GM12878 (cell line): ENCODE measurements at regions of chr2 and their contacts with region 1.

Region 1: GRCh38 chr2:161223139-161223732 is 63.0 kb downstream of the TANK start:
- DNase-seq: no peak
- ATAC-seq: peak; percentile 81
- H3K4me3 ChIP-seq: no peak overlapping the region
- H3K27ac ChIP-seq: no peak overlapping the region
- H3K4me1 ChIP-seq: no peaks in the 10 kb centered on the region
- H3K27me3 ChIP-seq: no peaks in the 10 kb centered on the region
- CTCF ChIP-seq: peak; percentile 51 to 65 (median 55)
- EP300 ChIP-seq: no peak
- POLR2A ChIP-seq: no peak
- RAD21 ChIP-seq: peak; percentile 71

Region 2: GRCh38 chr2:160613466-160614153 is 609.6 kb before region 1 on chr2:
- CTCF ChIA-PET with region 1: no interaction called
- POLR2A ChIA-PET with region 1: no interaction called
- RAD21 ChIA-PET with region 1: no interaction called
- SMC1A ChIA-PET with region 1: no interaction called
- in situ Hi-C with region 1: no loop called
- intact Hi-C with region 1: no loop called
- DNase-seq: no peak
- ATAC-seq: no peak
- H3K4me3 ChIP-seq: no peak overlapping the region
- H3K27ac ChIP-seq: no peak overlapping the region
- H3K4me1 ChIP-seq: no peaks in the 10 kb centered on the region
- H3K27me3 ChIP-seq: no peaks in the 10 kb centered on the region
- CTCF ChIP-seq: no peak
- EP300 ChIP-seq: no peak
- POLR2A ChIP-seq: no peak
- RAD21 ChIP-seq: no peak

Region 3: GRCh38 chr2:161208527-161209139 is 14.6 kb before region 1 on chr2:
- CTCF ChIA-PET with region 1: interaction called, 13 read pairs
- POLR2A ChIA-PET with region 1: no interaction called
- RAD21 ChIA-PET with region 1: interaction called, 7 read pairs
- SMC1A ChIA-PET with region 1: interaction called, 12 read pairs
- in situ Hi-C with region 1: no loop called
- intact Hi-C with region 1: no loop called
- DNase-seq: no peak
- ATAC-seq: peak; percentile 65
- H3K4me3 ChIP-seq: no peak overlapping the region
- H3K27ac ChIP-seq: no peak overlapping the region
- H3K4me1 ChIP-seq: peaks cover 5% of the 10 kb centered on the region
- H3K27me3 ChIP-seq: no peaks in the 10 kb centered on the region
- CTCF ChIP-seq: no peak
- EP300 ChIP-seq: no peak
- POLR2A ChIP-seq: no peak
- RAD21 ChIP-seq: no peak

Region 4: GRCh38 chr2:161238560-161239325 is 15.5 kb after region 1 on chr2:
- CTCF ChIA-PET with region 1: interaction called, 52 read pairs
- POLR2A ChIA-PET with region 1: interaction called, 4 read pairs
- RAD21 ChIA-PET with region 1: interaction called, 17 read pairs
- SMC1A ChIA-PET with region 1: interaction called, 46 read pairs
- in situ Hi-C with region 1: no loop called
- intact Hi-C with region 1: no loop called
- DNase-seq: no peak
- ATAC-seq: peak; percentile 44
- H3K4me3 ChIP-seq: peak overlapping the region; percentile 76
- H3K27ac ChIP-seq: peak overlapping the region; percentile 31
- H3K4me1 ChIP-seq: peaks cover 20% of the 10 kb centered on the region
- H3K27me3 ChIP-seq: no peaks in the 10 kb centered on the region
- CTCF ChIP-seq: no peak
- EP300 ChIP-seq: no peak
- POLR2A ChIP-seq: 0 out of 2 replicates have a peak, but pooled peaks have one; percentile 29
- RAD21 ChIP-seq: no peak

Region 5: DNA sequence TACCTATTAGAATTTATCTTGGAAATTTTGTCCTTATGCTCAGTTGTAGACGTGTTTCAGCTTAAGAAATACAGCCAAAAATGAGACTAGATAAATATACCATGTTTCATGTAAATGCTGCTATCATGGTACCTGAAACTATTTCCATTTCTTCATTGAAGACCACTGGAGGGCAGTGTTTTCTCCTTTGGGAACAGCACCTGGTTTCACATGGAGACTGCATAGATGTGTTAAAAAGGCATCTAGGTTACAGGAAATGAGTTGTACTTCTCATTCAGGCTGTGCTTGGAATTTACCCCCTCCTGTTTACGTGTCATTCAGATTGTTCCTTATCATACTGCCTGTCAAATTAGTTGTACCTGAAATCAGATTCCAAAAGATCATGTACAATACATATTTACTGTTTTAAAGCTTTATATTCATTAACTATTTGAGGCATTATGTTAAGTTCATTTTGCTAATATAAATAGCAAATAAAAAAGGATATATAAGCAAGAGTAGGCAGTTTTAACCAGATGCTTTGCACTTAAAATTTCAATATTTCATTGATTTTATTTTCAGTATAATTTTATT is 27.7 kb after region 1 on chr2:
- CTCF ChIA-PET with region 1: interaction called, 67 read pairs
- POLR2A ChIA-PET with region 1: no interaction called
- RAD21 ChIA-PET with region 1: interaction called, 8 read pairs
- SMC1A ChIA-PET with region 1: interaction called, 20 read pairs
- in situ Hi-C with region 1: no loop called
- intact Hi-C with region 1: no loop called
- DNase-seq: no peak
- ATAC-seq: peak; percentile 78
- H3K4me3 ChIP-seq: no peak overlapping the region
- H3K27ac ChIP-seq: no peak overlapping the region
- H3K4me1 ChIP-seq: no peaks in the 10 kb centered on the region
- H3K27me3 ChIP-seq: no peaks in the 10 kb centered on the region
- CTCF ChIP-seq: peak; percentile 48 to 58 (median 48); a peak in 5 of 6 replicates
- EP300 ChIP-seq: no peak
- POLR2A ChIP-seq: no peak
- RAD21 ChIP-seq: peak; percentile 56

Region 6: GRCh38 chr2:161265874-161266273 is 42.6 kb after region 1 on chr2:
- CTCF ChIA-PET with region 1: interaction called, 157 read pairs
- POLR2A ChIA-PET with region 1: no interaction called
- RAD21 ChIA-PET with region 1: interaction called, 30 read pairs
- SMC1A ChIA-PET with region 1: interaction called, 26 read pairs
- in situ Hi-C with region 1: no loop called
- intact Hi-C with region 1: no loop called
- DNase-seq: no peak
- ATAC-seq: no peak
- H3K4me3 ChIP-seq: no peak overlapping the region
- H3K27ac ChIP-seq: no peak overlapping the region
- H3K4me1 ChIP-seq: no peaks in the 10 kb centered on the region
- H3K27me3 ChIP-seq: no peaks in the 10 kb centered on the region
- CTCF ChIP-seq: no peak
- EP300 ChIP-seq: no peak
- POLR2A ChIP-seq: no peak
- RAD21 ChIP-seq: no peak

Region 7: DNA sequence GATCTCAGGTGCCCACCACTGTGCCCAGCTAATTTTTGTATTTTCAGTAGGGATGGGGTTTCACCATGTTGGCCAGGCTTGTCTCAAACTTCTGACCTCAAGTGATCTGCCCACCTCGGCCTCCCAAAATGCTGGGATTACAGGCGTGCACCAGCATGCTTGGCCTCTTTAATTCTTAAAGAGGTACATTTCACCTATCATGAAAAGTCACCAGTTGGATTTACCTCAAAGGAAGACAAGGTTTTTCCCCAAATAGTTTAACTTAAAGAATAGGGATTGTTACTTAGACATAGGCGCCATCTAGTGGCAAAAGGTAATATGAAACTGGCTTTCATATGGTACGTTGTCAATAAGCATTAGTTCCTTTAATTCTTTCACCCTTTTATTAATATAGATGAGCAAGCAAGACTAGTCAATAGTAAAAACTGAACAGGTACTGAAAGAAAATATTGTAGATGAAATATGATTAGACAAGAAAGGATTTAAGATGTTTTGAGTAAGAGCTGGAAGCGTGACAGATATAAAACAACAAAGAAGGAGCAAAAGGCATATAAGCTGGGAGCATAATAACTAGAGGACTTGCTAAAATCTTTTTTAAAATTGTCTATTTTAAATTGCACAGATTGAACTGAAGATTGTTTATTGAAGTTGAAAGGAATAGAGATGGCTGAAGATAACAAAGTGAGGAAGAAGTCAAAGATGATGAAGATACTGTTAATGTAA is 50.0 kb after region 1 on chr2:
- CTCF ChIA-PET with region 1: interaction called, 157 read pairs
- POLR2A ChIA-PET with region 1: no interaction called
- RAD21 ChIA-PET with region 1: interaction called, 30 read pairs
- SMC1A ChIA-PET with region 1: interaction called, 47 read pairs
- in situ Hi-C with region 1: no loop called
- intact Hi-C with region 1: loop called (anchors 1 kb)
- DNase-seq: peak; percentile 23
- ATAC-seq: peak; percentile 90
- H3K4me3 ChIP-seq: no peak overlapping the region
- H3K27ac ChIP-seq: no peak overlapping the region
- H3K4me1 ChIP-seq: no peaks in the 10 kb centered on the region
- H3K27me3 ChIP-seq: no peaks in the 10 kb centered on the region
- CTCF ChIP-seq: peak; percentile 45 to 66 (median 57); a peak in 5 of 6 replicates
- EP300 ChIP-seq: no peak
- POLR2A ChIP-seq: no peak
- RAD21 ChIP-seq: peak; percentile 82